ENCODE measurements at regions of chr22 and their contacts with region 1.

Region 1: GRCh38 chr22:22156716-22157347 is 87.8 kb upstream of the VPREB1 start:
- DNase-seq: peak; percentile 87
- CTCF ChIP-seq: peak; percentile 65

Region 2: DNA sequence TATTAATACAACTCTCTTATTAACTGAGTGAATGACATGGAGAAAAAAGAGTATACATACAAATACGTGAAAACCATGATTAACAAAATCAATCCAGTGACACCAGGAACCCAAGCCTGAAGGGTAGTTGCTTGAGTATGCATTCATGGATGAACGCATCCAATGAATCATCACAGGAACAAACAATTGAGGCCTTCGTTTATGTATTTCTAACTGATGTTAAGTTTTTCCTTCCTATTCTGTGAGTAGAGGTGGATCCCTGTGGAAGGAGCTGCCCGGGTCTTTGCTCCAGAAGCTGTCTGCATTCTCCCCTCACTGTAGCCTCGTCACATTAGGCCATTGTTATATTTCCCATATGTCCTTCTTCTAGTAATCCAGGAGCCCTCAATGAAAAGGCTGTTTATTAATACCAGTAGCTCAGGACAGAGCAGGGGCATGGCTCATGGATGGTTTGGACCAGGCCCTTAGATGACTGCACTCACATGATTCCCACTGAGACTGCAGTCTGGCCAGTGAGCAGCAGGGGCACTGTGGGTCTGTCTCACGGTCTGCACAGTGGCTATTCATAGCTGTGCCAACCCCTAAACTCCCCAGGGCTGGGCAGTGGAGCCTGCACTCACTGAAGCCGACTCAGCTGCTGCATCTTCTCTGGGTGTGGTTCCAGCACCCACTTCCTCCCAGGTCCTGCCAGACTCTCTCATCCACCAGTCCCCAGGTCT is 46.1 kb before region 1 on chr22:
- CTCF ChIA-PET with region 1: interaction called, 16 read pairs
- POLR2A ChIA-PET with region 1: interaction called, 3 read pairs
- DNase-seq: peak; percentile 87
- CTCF ChIP-seq: peak; percentile 56

Region 3: DNA sequence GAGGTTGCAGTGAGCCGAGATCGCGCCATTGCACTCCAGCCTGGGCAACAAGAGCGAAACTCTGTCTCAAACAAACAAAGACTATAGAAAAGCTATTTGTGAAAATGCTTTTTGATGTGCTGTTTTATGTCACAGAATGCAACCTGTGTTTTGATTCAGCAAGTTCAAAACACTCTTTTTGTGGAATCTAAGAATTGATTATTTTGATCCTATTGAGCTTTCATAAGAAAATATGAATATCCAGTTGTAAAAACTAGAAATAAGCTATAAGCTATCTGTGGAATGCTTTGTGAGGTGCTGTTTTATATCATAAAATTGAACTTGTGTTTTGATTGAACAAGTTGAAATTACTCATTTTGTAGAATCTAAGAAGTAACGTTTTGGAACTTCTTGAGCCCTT is 22.9 kb before region 1 on chr22:
- CTCF ChIA-PET with region 1: interaction called, 20 read pairs
- POLR2A ChIA-PET with region 1: no interaction called
- DNase-seq: no peak
- CTCF ChIP-seq: no peak

Region 4: DNA sequence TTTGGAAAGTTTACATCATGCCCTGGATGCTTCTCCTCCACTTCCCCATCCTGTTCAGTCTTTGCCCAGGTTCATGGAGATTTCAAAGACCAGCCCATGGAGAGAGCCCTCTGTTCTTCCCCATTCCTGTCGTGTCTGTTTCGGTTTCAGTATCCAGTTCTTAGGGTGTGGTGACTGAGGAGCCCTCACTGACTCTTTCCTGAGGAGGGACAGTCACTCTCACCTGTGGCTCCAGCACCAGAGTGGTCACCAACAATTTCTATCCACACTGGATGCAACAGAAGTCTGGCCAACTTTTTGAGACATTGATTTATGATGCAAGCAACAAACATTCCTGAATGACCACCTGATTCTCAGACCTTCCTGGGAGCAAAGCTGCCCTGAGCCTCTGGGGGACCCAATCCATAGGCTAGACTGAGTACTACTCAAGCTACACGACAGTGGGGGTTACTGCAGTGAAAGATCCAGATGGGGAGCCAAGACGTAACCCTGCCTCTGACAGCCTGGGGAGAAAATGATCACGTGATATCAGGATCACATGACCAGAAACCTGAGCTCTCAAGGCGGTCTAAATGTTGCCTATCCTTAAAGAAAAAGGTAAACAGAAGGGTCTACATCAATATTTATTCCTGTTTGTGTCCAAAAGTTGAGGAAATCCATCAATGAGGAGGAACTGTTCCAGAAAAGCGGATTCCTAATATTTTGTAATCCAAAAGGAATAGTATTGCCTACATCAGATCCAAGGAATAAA is 11.5 kb after region 1 on chr22:
- CTCF ChIA-PET with region 1: interaction called, 40 read pairs
- POLR2A ChIA-PET with region 1: no interaction called
- DNase-seq: peak; percentile 62
- CTCF ChIP-seq: no peak

Region 5: DNA sequence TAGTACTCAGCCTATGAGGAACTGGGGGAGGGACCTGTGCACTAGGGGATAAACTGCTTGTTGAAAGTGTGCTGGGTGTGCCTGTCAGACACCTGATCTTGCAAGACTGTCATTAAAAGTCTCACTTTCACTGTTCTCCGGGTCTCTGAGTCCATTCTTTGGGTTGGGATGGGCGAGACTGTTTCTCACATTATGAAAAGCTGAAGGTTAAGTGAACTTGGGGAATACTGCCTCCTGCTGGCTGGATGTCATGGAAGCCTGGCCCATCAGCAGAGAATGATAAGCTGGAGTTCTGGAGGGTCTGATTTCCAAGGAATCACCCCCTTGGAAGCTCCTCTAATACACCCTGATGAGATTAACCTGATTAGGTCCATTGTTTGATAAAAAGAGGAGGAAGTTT is 78.7 kb after region 1 on chr22:
- CTCF ChIA-PET with region 1: interaction called, 16 read pairs
- POLR2A ChIA-PET with region 1: no interaction called
- DNase-seq: peak; percentile 70
- CTCF ChIP-seq: peak; percentile 70